ENCODE measurements at regions of chr1 and their contacts with region 1.

Region 1: GRCh38 chr1:91165033-91165654 is 143.3 kb upstream of the ZNF644 start:
- DNase-seq: peak; percentile 39 to 79 (median 69)
- ATAC-seq: peak; percentile 76
- H3K4me3 ChIP-seq: no peak overlapping the region
- H3K4me3 Mint-ChIP-seq: no peak overlapping the region
- H3K27ac ChIP-seq: no peak overlapping the region
- H3K27ac Mint-ChIP-seq: no peak overlapping the region
- H3K4me1 ChIP-seq: no peaks in the 10 kb centered on the region
- H3K4me1 Mint-ChIP-seq: no peaks in the 10 kb centered on the region
- H3K27me3 ChIP-seq: no peaks in the 10 kb centered on the region
- H3K27me3 Mint-ChIP-seq: no peaks in the 10 kb centered on the region
- CTCF ChIP-seq: peak; percentile 82

Region 2: DNA sequence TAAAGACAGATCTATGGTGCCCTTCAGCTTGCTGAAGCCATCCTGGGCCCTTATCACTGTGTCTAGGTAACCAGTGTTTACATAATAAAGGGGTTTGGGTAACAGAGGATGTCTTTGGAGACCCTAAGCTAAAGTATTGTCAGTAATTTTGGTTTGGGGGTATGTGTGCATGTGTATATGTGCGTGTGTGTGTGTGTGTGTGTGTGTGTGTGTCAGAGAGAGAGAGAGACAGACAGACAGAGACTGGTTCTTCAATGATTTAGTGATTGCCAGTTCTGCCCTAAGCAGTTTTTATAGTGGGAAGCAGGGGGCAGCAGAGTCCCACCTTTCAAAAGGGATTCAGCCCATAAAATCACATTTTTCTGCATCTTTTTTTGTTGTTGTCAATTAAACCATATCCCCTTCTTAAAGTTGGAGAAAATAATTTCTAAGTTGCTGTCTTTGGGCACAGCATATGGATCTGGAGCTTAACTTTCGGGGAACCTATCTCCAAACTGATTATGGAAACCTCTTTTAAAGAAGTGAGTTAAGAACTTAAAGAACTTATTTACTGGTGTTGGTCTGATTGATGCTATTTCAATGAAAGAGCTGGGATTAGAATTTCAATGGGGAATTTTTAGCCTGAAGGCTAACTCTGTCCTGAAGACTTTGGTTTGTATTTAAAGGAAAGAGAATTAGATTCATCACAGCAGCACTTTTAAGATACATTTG is 1119.1 kb before region 1 on chr1:
- CTCF ChIA-PET with region 1: interaction called, 3 read pairs
- POLR2A ChIA-PET with region 1: no interaction called
- intact Hi-C with region 1: loop called (anchors 2 to 5 kb)
- DNase-seq: peak in 4 of 9 experiments; percentile 18 to 27 (median 20)
- ATAC-seq: no peak
- H3K4me3 ChIP-seq: no peak overlapping the region
- H3K4me3 Mint-ChIP-seq: no peak overlapping the region
- H3K27ac ChIP-seq: no peak overlapping the region
- H3K27ac Mint-ChIP-seq: no peak overlapping the region
- H3K4me1 ChIP-seq: no peaks in the 10 kb centered on the region
- H3K4me1 Mint-ChIP-seq: no peaks in the 10 kb centered on the region
- H3K27me3 ChIP-seq: no peaks in the 10 kb centered on the region
- H3K27me3 Mint-ChIP-seq: peaks cover under 1% of the 10 kb centered on the region
- CTCF ChIP-seq: peak; percentile 48

Region 3: DNA sequence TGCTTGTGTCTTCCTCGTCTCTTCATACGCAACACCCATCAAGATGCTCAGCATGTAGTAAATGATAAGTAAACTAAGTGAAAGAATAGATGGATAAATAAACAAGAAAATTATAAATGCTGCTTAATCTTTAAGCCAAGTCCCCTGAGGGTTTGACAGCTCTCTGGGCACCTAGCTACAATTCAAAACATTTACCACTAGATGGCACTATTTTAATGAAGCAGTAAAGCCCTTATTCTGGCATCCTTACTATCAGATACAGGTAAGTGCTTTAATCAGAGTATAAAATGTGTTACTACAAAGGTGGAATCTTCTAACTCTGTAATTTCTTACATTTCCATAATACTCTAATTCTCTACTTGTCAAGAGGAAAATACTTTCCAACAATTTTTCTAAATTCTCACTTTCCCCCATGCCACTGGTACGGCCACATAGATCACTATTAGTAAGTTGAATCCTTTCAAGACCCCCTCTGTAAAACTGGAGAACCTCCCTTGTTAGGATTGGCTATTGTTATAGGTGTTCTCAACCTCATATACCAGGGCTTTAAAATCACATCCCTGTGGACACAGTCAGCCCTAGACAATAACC is 585.8 kb before region 1 on chr1:
- CTCF ChIA-PET with region 1: interaction called, 11 read pairs
- POLR2A ChIA-PET with region 1: no interaction called
- intact Hi-C with region 1: loop called in 1 of 2 experiments (anchors 1 kb)
- DNase-seq: peak in 2 of 9 experiments; percentile 37 to 50
- ATAC-seq: no peak
- H3K4me3 ChIP-seq: no peak overlapping the region
- H3K4me3 Mint-ChIP-seq: no peak overlapping the region
- H3K27ac ChIP-seq: no peak overlapping the region
- H3K27ac Mint-ChIP-seq: no peak overlapping the region
- H3K4me1 ChIP-seq: no peaks in the 10 kb centered on the region
- H3K4me1 Mint-ChIP-seq: no peaks in the 10 kb centered on the region
- H3K27me3 ChIP-seq: peaks cover 2 to 3% of the 10 kb centered on the region in 2 experiments
- H3K27me3 Mint-ChIP-seq: no peaks in the 10 kb centered on the region
- CTCF ChIP-seq: peak; percentile 56

Region 4: DNA sequence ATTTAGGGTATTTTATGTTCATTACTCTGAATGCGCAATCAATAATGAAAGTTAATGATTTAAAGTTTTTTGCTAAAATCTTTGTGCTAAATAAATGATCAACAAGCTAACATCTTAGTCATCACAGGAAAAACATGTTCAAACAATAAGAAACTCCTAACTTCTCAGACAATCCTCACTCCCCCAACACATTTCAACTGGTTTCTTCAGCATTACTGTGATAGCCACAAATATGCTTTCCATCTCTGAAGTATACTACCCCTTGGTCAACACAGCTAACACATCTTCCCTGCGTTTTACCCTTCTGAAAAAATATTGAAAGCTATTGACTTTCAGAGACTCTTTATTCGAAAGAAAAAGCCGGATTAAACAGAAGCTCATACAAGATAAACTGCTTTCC is 229.1 kb before region 1 on chr1:
- CTCF ChIA-PET with region 1: no interaction called
- POLR2A ChIA-PET with region 1: no interaction called
- intact Hi-C with region 1: no loop called
- DNase-seq: no peak
- ATAC-seq: no peak
- H3K4me3 ChIP-seq: no peak overlapping the region
- H3K4me3 Mint-ChIP-seq: peak overlapping the region; percentile 15
- H3K27ac ChIP-seq: no peak overlapping the region
- H3K27ac Mint-ChIP-seq: peak overlapping the region; percentile 4
- H3K4me1 ChIP-seq: peaks cover 6% of the 10 kb centered on the region
- H3K4me1 Mint-ChIP-seq: peaks cover 82% of the 10 kb centered on the region
- H3K27me3 ChIP-seq: no peaks in the 10 kb centered on the region
- H3K27me3 Mint-ChIP-seq: no peaks in the 10 kb centered on the region
- CTCF ChIP-seq: no peak

Region 5: DNA sequence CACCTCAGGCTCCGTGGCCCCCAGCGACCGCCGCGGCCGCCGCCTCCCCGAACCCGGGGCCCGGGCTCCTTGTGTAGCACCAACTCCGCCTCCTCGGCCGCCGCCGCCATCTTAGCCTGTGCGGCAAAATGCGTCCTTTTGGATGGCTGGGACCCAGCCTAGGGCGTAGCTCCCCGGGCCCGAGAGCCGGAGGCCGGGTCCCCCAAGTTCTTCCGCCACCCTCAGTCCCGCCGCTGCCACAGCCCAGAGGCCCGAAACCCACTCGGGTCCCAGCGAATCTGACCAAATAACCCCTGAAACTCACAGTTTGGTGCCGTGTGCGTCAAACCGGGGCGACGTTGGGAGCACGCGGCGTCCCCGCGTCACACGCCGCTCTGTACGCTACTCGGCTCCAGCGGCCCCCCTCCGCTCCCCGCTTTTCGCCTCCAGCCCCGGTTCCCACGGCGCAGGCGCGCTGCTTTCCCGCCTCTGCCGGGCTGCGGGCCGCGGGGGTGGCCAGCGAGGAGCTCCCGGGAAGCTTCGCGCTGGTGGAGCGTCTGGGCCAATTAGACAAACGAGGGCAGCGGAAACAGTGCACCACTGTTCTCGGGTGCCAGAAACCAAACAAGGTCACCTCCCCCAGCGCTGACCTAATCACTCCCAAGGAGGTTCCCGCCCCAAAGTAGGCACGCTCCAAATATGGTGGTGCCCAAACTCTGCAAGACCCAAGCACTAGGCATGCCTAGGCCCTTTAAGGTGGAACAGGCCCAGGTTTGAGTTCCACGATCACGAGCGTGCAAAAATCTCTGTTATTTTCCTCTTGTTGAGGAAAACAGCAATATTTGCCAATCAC is 143.2 kb before region 1 on chr1 and contains the start of gene ZNF644:
- CTCF ChIA-PET with region 1: interaction called, 3 read pairs
- POLR2A ChIA-PET with region 1: no interaction called
- intact Hi-C with region 1: loop called (anchors 1 to 5 kb)
- DNase-seq: peak; percentile 76 to 97 (median 89)
- ATAC-seq: peak; percentile 84
- H3K4me3 ChIP-seq: peak within 1 kb of the TSS; percentile 75 to 98
- H3K4me3 Mint-ChIP-seq: peak within 1 kb of the TSS; percentile 97
- H3K27ac ChIP-seq: peak within 1 kb of the TSS; percentile 99 to 100
- H3K27ac Mint-ChIP-seq: peak within 1 kb of the TSS; percentile 99
- H3K4me1 ChIP-seq: peaks cover 49% of the 10 kb centered on the region
- H3K4me1 Mint-ChIP-seq: peaks cover 64% of the 10 kb centered on the region
- H3K27me3 ChIP-seq: no peaks in the 10 kb centered on the region
- H3K27me3 Mint-ChIP-seq: no peaks in the 10 kb centered on the region
- CTCF ChIP-seq: no peak
- total RNA-seq, gene ZNF644: 105 to 109 TPM

Region 6: DNA sequence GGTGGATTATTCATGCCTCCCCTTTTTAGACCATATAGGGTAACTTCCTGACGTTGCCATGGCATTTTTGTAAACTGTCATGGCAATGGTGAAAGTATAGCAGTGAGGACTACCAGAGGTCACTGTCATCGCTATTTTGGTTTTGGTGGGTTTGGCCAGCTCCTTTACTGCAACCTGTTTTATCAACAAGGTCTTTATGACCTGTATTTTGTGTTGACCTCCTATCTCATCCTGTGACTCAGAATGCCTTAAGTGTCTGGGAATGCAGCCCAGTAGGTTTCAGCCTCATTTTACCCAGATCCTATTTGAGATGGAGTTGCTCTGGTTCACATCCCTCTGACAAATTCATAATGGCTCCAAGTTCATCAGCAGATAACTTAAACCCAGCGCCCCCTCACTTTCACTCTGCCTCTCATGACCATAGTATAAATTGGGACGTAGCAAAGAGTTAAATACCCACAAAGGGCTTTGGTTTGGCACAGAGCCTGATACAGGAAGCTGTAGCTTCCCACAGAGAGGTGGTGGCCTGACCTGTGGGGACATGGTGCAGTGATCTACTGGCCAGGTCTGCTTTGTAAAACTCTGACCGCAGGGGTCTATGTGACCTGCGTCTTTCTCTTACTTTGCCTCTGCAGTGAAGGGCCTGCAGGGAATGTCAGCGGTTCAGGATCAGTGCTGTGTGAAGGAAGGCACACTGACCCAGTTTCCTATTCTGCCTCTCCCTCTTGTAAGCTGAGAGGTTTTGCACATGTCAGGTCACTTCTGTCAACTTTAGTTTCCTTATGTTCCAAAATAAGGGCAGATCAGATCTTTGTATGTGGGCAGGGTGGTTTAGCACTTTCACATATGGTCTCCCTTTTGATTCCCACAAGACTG is 65.2 kb before region 1 on chr1:
- CTCF ChIA-PET with region 1: no interaction called
- POLR2A ChIA-PET with region 1: no interaction called
- intact Hi-C with region 1: no loop called
- DNase-seq: peak in 3 of 9 experiments; percentile 24 to 42 (median 27)
- ATAC-seq: peak; percentile 29
- H3K4me3 ChIP-seq: peak overlapping the region in 1 of 2 experiments; percentile 9
- H3K4me3 Mint-ChIP-seq: peak overlapping the region; percentile 13
- H3K27ac ChIP-seq: no peak overlapping the region
- H3K27ac Mint-ChIP-seq: no peak overlapping the region
- H3K4me1 ChIP-seq: peaks cover 12% of the 10 kb centered on the region
- H3K4me1 Mint-ChIP-seq: peaks cover 8% of the 10 kb centered on the region
- H3K27me3 ChIP-seq: peaks cover 0 to 3% of the 10 kb centered on the region in 2 experiments
- H3K27me3 Mint-ChIP-seq: peaks cover 11% of the 10 kb centered on the region
- CTCF ChIP-seq: no peak

Region 7: GRCh38 chr1:91153341-91153740 is 11.8 kb before region 1 on chr1:
- CTCF ChIA-PET with region 1: interaction called, 27 read pairs
- POLR2A ChIA-PET with region 1: no interaction called
- intact Hi-C with region 1: no loop called
- DNase-seq: no peak
- ATAC-seq: no peak
- H3K4me3 ChIP-seq: no peak overlapping the region
- H3K4me3 Mint-ChIP-seq: no peak overlapping the region
- H3K27ac ChIP-seq: no peak overlapping the region
- H3K27ac Mint-ChIP-seq: no peak overlapping the region
- H3K4me1 ChIP-seq: no peaks in the 10 kb centered on the region
- H3K4me1 Mint-ChIP-seq: no peaks in the 10 kb centered on the region
- H3K27me3 ChIP-seq: no peaks in the 10 kb centered on the region
- H3K27me3 Mint-ChIP-seq: peaks cover 11% of the 10 kb centered on the region
- CTCF ChIP-seq: no peak

Region 8: GRCh38 chr1:91924146-91924545 is 759.0 kb after region 1 on chr1:
- CTCF ChIA-PET with region 1: interaction called, 17 read pairs
- POLR2A ChIA-PET with region 1: no interaction called
- intact Hi-C with region 1: loop called (anchors 1 to 2 kb)
- DNase-seq: no peak
- ATAC-seq: no peak
- H3K4me3 ChIP-seq: no peak overlapping the region
- H3K4me3 Mint-ChIP-seq: no peak overlapping the region
- H3K27ac ChIP-seq: no peak overlapping the region
- H3K27ac Mint-ChIP-seq: no peak overlapping the region
- H3K4me1 ChIP-seq: no peaks in the 10 kb centered on the region
- H3K4me1 Mint-ChIP-seq: no peaks in the 10 kb centered on the region
- H3K27me3 ChIP-seq: no peaks in the 10 kb centered on the region
- H3K27me3 Mint-ChIP-seq: no peaks in the 10 kb centered on the region
- CTCF ChIP-seq: no peak

Measured in CD8-positive, alpha-beta T cell (primary cell).